ENCODE measurements at regions of chr2 and their contacts with region 1.

Region 1: DNA sequence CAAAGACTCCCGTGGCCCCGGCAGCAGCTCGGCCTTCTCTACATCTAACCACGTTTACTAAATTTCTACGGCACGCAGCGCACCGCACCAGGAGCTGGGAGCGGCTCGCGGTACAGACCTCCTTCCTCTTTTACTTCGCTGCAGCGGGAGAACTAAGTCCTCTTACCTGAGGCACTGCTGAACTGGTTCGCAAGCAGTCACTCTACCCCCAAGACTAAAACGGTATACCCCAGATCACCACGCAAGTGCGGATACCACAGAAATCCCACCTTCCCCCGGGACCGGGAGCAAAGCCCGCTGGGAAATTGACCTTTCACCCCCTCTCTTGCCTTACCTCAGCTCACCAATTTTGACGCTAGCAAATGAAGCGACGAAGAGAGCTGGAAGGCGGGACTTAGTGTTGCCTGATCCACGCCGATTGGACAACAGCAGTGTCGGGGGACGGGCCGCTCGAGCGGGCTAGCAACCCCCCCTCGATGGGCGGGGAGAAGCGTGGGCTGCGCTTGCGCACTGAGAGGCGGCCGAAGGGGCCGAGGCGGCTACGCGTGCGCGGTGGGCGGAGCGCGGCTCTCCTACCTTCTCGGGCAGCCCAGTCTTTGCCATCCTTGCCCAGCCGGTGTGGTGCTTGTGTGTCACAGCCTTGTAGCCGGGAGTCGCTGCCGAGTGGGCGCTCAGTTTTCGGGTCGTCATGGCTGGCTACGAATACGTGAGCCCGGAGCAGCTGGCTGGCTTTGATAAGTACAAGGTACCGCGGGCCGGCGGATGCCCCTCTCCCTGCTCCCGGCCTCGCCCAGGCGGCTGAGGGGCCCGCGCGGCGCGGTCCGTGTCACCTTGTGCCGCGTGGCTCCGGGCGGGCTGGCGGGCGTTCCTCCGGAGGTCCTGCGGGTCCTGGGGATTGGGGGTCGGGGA is at the start of gene SELENOI:
- DNase-seq: peak; percentile 98 to 100 (median 99)
- ATAC-seq: peak; percentile 93
- H3K4me3 ChIP-seq: peak within 1 kb of the TSS; percentile 96
- H3K4me3 Mint-ChIP-seq: peak within 1 kb of the TSS; percentile 97
- H3K27ac ChIP-seq: peak within 1 kb of the TSS; percentile 92 to 96
- H3K27ac Mint-ChIP-seq: peak within 1 kb of the TSS; percentile 97
- H3K4me1 ChIP-seq: peaks cover 20% of the 10 kb centered on the region
- H3K4me1 Mint-ChIP-seq: peaks cover 43% of the 10 kb centered on the region
- H3K27me3 ChIP-seq: no peaks in the 10 kb centered on the region
- H3K27me3 Mint-ChIP-seq: no peaks in the 10 kb centered on the region
- CTCF ChIP-seq: no peak
- total RNA-seq, gene SELENOI: 27.7 to 31.5 TPM

Region 2: DNA sequence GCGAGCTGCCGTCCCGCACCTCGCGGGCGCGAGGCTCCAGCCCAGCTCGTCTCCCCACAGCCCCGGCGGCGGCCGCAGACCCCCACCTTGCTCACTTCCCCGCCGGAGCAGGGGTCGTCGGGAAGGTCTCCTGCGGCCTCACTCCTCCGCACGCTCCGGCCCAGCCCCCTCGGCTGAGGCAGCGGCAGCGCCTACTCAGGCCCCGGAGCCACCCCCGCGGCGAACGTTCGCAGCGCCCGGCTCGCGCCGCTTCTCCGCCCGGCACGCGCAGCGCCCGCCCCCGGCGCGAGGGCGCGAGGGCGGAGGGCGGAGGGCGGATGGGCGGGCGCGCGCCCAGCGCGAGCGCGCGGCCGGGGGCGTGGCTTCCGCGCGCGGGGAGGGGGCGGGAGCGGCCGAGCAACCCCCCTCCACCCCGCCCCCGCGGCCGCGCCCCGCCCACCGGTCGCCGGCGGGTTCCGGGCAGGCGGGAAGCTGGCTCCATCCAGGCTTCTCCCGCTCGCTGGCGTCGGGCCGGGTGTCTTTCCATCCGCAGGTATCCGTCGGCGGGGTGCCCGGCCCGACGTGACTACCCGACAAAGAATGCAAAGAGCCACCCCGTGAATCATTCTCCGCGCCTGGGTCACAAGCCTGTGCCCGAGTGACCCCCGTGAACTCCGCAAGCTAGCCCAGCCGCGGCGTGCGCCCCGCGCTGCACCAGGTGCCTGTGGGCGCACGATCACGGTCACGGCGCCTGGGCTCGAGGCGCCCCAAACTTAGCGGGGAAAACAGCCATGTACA is 672.3 kb before region 1 on chr2 and contains the start of gene DTNB:
- CTCF ChIA-PET with region 1: no interaction called
- POLR2A ChIA-PET with region 1: no interaction called
- intact Hi-C with region 1: loop called in 1 of 2 experiments (anchors 10 kb)
- DNase-seq: peak; percentile 58 to 92 (median 76)
- ATAC-seq: peak; percentile 75
- H3K4me3 ChIP-seq: peak within 1 kb of the TSS; percentile 84
- H3K4me3 Mint-ChIP-seq: peak within 1 kb of the TSS; percentile 91
- H3K27ac ChIP-seq: peak within 1 kb of the TSS; percentile 43 to 66
- H3K27ac Mint-ChIP-seq: peak within 1 kb of the TSS; percentile 85
- H3K4me1 ChIP-seq: peaks cover 23% of the 10 kb centered on the region
- H3K4me1 Mint-ChIP-seq: peaks cover 35% of the 10 kb centered on the region
- H3K27me3 ChIP-seq: peaks cover 0 to 2% of the 10 kb centered on the region in 2 experiments
- H3K27me3 Mint-ChIP-seq: no peaks in the 10 kb centered on the region
- CTCF ChIP-seq: no peak
- total RNA-seq, gene DTNB: 30.1 to 33.6 TPM

Region 3: GRCh38 chr2:26184555-26185303 is 161.1 kb before region 1 on chr2:
- CTCF ChIA-PET with region 1: interaction called, 3 read pairs
- POLR2A ChIA-PET with region 1: interaction called, 14 read pairs
- intact Hi-C with region 1: no loop called
- DNase-seq: peak; percentile 81 to 96 (median 86)
- ATAC-seq: peak; percentile 99
- H3K4me3 ChIP-seq: peak overlapping the region; percentile 60
- H3K4me3 Mint-ChIP-seq: peak overlapping the region; percentile 89
- H3K27ac ChIP-seq: peak overlapping the region in 1 of 2 donors; percentile 24
- H3K27ac Mint-ChIP-seq: peak overlapping the region; percentile 71
- H3K4me1 ChIP-seq: peaks cover 26% of the 10 kb centered on the region
- H3K4me1 Mint-ChIP-seq: peaks cover 21% of the 10 kb centered on the region
- H3K27me3 ChIP-seq: peaks cover 0 to 4% of the 10 kb centered on the region in 2 experiments
- H3K27me3 Mint-ChIP-seq: peaks cover 13% of the 10 kb centered on the region
- CTCF ChIP-seq: peak; percentile 59

Region 4: DNA sequence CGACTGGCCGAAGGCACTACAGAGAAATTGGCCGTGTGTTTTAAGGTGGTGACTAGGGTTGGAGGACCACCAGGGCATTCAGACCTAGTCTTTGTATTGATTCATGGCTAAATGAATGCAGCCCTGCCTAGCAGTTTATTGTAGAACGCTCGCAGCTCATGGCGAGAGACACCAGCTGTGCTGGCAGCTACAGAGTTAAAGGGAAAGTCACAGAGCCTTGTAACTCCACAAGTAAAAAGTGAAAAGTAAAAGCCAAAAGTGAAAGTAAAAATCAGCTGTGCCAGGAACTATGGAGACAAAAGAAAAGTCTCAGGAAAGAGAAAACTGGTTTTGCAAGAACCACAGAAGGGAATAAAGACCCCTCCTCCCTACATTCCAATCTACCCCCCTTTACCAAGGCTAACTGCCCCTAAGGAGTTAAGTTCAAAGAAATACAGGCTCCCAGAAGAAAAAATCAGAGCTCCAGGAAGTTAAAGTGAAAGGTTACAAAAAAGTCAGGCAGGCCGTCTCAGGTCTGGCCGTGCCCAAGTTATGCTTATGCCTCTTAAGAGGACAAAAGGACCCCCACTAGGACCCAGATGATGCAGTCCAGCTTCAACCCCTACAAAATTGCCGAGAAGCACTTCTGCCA is 46.2 kb before region 1 on chr2:
- CTCF ChIA-PET with region 1: no interaction called
- POLR2A ChIA-PET with region 1: interaction called, 52 read pairs
- intact Hi-C with region 1: loop called (anchors 5 kb)
- DNase-seq: peak in 8 of 14 experiments; percentile 9 to 62 (median 40)
- ATAC-seq: peak; percentile 46
- H3K4me3 ChIP-seq: peak overlapping the region; percentile 79
- H3K4me3 Mint-ChIP-seq: no peak overlapping the region
- H3K27ac ChIP-seq: peak overlapping the region; percentile 62 to 65
- H3K27ac Mint-ChIP-seq: no peak overlapping the region
- H3K4me1 ChIP-seq: peaks cover 24% of the 10 kb centered on the region
- H3K4me1 Mint-ChIP-seq: no peaks in the 10 kb centered on the region
- H3K27me3 ChIP-seq: no peaks in the 10 kb centered on the region
- H3K27me3 Mint-ChIP-seq: no peaks in the 10 kb centered on the region
- CTCF ChIP-seq: no peak